Activated CD8-positive, alpha-beta T cell treated with anti-CD3 and anti-CD28 coated beads, Interleukin-2, amount 10 ng/mL, durations not matched to agents 7 days and 5 days (primary cell): ENCODE measurements at regions of chr11 and their contacts with region 1.

Region 1: GRCh38 chr11:113289431-113290187 is 24.8 kb upstream of the TTC12 start:
- DNase-seq: peak; percentile 66
- ATAC-seq: peak; percentile 91
- H3K4me3 Mint-ChIP-seq: no peak overlapping the region
- H3K27ac Mint-ChIP-seq: no peak overlapping the region
- H3K4me1 Mint-ChIP-seq: no peaks in the 10 kb centered on the region
- H3K27me3 Mint-ChIP-seq: peaks cover 4% of the 10 kb centered on the region

Region 2: DNA sequence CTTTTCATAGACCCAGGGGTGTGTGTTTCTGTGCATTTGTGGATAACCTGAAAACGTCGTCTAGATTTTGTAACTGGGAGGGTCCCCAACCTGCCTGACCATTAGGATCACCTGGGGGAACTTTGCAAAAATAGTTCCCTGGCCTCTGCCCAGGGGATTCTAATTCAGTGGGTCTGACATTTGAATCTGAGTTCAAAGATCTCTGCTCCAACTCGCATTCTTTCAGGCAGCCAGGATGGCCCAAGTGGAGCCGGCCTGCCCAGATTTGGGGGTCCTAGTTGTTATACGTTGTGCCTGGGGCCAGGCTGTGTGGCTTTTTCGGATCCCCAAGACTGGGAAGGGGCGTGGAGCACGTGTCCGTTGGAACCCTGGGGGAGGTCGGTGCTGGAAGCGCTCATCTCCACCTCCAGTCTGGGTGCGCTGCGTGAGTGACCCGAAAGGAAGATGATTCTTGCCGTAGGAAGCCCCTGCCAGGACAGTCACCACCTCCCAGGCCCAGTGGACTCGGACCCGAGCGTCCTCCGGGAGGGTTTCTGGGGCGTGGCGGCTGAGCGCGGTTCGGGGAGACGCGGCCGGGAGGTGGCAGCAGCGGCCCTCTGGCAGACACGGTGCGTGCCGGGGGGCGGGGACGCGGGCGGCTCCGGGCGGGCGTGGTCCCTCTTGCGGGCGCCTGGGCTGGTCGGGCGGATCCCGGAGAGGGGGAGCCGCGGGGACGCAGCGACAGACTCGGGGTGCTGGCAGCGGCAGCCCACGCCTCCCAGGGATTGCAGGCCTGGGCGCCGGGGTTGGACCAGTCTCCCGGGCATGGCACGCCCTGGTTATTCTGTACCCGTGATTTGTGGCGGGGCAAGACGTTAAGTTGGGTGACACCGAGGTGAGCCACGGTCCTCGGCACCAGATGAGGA is 999.8 kb before region 1 on chr11:
- CTCF ChIA-PET with region 1: interaction called, 14 read pairs
- POLR2A ChIA-PET with region 1: no interaction called
- DNase-seq: peak; percentile 88
- ATAC-seq: peak; percentile 98
- H3K4me3 Mint-ChIP-seq: peak overlapping the region; percentile 69
- H3K27ac Mint-ChIP-seq: peak overlapping the region; percentile 70
- H3K4me1 Mint-ChIP-seq: peaks cover 23% of the 10 kb centered on the region
- H3K27me3 Mint-ChIP-seq: peaks cover 13% of the 10 kb centered on the region

Region 3: GRCh38 chr11:112588252-112588694 is 701.3 kb before region 1 on chr11:
- CTCF ChIA-PET with region 1: interaction called, 46 read pairs
- POLR2A ChIA-PET with region 1: no interaction called
- DNase-seq: peak; percentile 56
- ATAC-seq: peak; percentile 90
- H3K4me3 Mint-ChIP-seq: no peak overlapping the region
- H3K27ac Mint-ChIP-seq: no peak overlapping the region
- H3K4me1 Mint-ChIP-seq: no peaks in the 10 kb centered on the region
- H3K27me3 Mint-ChIP-seq: peaks cover 15% of the 10 kb centered on the region

Region 4: GRCh38 chr11:112593440-112593839 is 696.2 kb before region 1 on chr11:
- CTCF ChIA-PET with region 1: interaction called, 46 read pairs
- POLR2A ChIA-PET with region 1: no interaction called
- DNase-seq: no peak
- ATAC-seq: no peak
- H3K4me3 Mint-ChIP-seq: no peak overlapping the region
- H3K27ac Mint-ChIP-seq: no peak overlapping the region
- H3K4me1 Mint-ChIP-seq: no peaks in the 10 kb centered on the region
- H3K27me3 Mint-ChIP-seq: peaks cover 8% of the 10 kb centered on the region

Region 5: DNA sequence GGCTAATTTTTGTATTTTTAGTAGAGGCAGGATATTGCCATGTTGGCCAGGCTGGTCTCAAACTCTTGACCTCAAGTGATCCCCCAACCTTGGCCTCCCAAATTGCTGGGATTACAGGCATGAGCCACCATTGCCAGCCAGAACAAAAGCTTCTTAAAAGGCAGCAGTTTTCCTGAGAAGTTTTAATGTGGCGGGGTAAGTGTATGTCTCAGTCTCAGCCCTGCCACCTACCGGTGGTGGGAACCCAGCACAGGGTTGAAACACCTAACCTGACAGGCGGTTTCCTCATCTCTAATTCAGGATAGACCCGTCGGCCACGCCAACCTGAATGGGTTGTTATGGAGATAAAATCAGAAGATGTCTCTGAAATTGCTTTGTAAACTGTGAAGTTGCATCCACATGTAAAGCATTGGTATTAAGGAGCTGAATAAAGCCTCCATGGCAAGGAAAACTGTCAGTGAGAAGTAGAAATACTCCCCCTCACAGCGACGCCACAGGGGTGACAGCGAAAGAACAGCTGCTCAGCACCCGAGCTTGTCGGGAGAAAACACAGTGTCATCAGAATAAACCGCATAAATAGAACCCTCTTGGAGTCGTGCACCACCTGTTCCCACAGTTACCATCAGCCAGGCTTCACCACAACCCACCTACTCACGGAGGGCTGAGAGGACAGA is 494.3 kb before region 1 on chr11:
- CTCF ChIA-PET with region 1: interaction called, 10 read pairs
- POLR2A ChIA-PET with region 1: no interaction called
- DNase-seq: peak; percentile 45
- ATAC-seq: peak; percentile 63
- H3K4me3 Mint-ChIP-seq: no peak overlapping the region
- H3K27ac Mint-ChIP-seq: no peak overlapping the region
- H3K4me1 Mint-ChIP-seq: peaks cover 14% of the 10 kb centered on the region
- H3K27me3 Mint-ChIP-seq: peaks cover 1% of the 10 kb centered on the region

Region 6: GRCh38 chr11:113305440-113306336 is 16.1 kb after region 1 on chr11:
- CTCF ChIA-PET with region 1: interaction called, 21 read pairs
- POLR2A ChIA-PET with region 1: no interaction called
- DNase-seq: peak; percentile 70
- ATAC-seq: peak; percentile 91
- H3K4me3 Mint-ChIP-seq: no peak overlapping the region
- H3K27ac Mint-ChIP-seq: no peak overlapping the region
- H3K4me1 Mint-ChIP-seq: no peaks in the 10 kb centered on the region
- H3K27me3 Mint-ChIP-seq: peaks cover 6% of the 10 kb centered on the region